ENCODE measurements at regions of chr21 and their contacts with region 1.

Region 1: DNA sequence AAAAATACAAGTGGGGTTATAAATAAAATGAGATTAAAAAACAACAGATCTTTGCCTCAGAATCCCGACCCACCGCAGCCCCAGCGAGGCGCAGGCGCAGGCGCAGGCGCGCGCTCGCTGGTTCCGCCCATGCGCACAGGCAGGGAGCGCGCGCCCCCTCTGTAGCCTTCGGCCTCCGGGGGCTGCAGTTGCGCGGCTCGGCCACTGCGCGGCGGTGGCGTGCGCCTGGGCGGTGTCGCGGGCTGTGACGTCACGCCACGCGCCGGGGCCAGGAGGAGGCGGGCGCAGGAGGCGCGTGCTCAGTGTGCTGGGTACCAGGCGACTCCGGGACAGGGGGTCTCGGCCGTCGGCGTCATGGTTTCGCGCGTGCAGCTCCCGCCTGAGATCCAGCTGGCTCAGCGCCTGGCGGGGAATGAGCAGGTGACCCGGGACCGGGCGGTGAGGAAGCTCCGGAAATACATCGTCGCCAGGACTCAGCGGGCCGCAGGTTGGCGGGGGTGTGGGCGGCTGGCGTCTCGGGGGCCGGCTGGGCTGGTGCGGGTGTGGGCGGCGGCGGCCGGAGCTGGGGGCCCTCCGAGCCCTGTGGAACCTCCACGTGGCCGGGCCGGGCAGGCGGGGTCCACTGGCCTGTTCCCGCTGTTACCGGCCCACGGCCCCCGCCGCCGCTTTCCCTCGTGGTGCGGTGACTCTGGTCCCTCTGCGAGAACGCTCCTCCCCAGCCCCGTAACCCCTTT is at the start of gene RRP1:
- DNase-seq: peak; percentile 97 to 98 (median 98)
- ATAC-seq: peak; percentile 97
- H3K4me3 ChIP-seq: peak within 1 kb of the TSS; percentile 95
- H3K27ac ChIP-seq: peak within 1 kb of the TSS; percentile 85
- H3K4me1 ChIP-seq: peaks cover 10 to 43% of the 10 kb centered on the region in 2 experiments; a peak in 3 of 5 replicates
- H3K27me3 ChIP-seq: peaks cover 0 to 5% of the 10 kb centered on the region in 2 experiments; a peak in 2 of 5 replicates
- CTCF ChIP-seq: peak; percentile 97 to 99 (median 98)
- EP300 ChIP-seq: no peak
- POLR2A ChIP-seq: peak; percentile 92
- RAD21 ChIP-seq: peak; percentile 67 to 79
- polyA plus RNA-seq, gene RRP1: 0.89 to 1.8 TPM

Region 2: GRCh38 chr21:43802713-43803313 is 13.4 kb after region 1 on chr21:
- CTCF ChIA-PET with region 1: no interaction called
- POLR2A ChIA-PET with region 1: interaction called, 11 read pairs
- in situ Hi-C with region 1: no loop called
- intact Hi-C with region 1: no loop called
- DNase-seq: no peak
- ATAC-seq: no peak
- H3K4me3 ChIP-seq: no peak overlapping the region
- H3K27ac ChIP-seq: no peak overlapping the region
- H3K4me1 ChIP-seq: peaks cover 10 to 52% of the 10 kb centered on the region in 2 experiments; a peak in 4 of 5 replicates
- H3K27me3 ChIP-seq: no peaks in the 10 kb centered on the region
- CTCF ChIP-seq: no peak
- EP300 ChIP-seq: no peak
- POLR2A ChIP-seq: peak; percentile 33; the same call in 1 of the 2 replicates
- RAD21 ChIP-seq: no peak